A549 (cell line): ENCODE measurements at regions of chr20 and their contacts with region 1.

Region 1: DNA sequence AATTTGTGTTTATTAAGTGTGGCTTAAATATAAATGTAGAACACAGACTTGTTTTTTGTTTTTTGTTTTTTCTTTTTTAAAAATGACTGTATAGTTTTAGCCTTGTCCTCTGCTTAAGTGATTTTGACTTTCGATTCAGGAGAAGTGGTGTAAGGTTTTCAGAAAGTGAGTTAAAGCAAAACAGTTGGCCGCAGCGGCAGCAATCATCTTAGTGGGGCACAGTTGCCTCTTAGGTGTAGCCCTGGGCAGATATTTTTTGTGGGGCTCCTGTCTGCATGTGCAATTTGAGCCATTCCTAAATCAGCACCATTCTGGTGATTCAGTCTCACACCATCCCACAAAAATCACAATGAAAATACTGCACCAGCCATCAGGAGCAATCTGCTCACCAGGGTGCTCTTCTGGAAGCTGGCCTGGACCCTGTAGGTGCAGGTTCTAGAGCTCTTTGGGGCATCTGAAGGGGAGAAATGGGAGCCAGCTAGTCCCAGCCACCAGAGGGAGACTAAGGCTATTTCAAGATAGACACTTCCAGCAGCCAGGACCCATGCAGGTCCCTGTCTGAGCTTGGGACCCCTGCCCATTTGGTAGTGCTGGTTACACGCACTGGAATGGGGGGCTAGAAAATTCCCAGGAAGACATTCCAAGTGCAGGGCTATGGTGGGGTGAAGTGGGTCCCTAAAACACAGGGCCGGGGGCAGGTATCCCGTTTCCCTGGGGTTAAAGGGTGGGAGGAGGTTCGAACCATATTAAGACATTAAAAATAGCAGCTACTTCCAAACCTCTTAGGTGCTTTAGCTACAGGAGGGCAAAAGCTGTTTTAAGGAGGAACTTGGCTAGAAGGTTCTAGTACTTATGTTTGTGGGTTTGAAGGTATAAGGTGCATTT is 156.6 kb downstream of the NFATC2 start:
- DNase-seq: peak; percentile 62 to 69
- ATAC-seq: peak; percentile 74 to 84
- H3K4me3 ChIP-seq: no peak overlapping the region
- H3K27ac ChIP-seq: no peak overlapping the region
- H3K4me1 ChIP-seq: peaks cover 34% of the 10 kb centered on the region
- CTCF ChIP-seq: peak; percentile 60
- EP300 ChIP-seq: no peak
- POLR2A ChIP-seq: no peak
- RAD21 ChIP-seq: peak; percentile 73

Region 2: GRCh38 chr20:51372176-51372803 is 13.6 kb before region 1 on chr20:
- CTCF ChIA-PET with region 1: interaction called, 24 read pairs
- POLR2A ChIA-PET with region 1: no interaction called
- DNase-seq: peak; percentile 73 to 91
- ATAC-seq: peak; percentile 97 to 98
- H3K4me3 ChIP-seq: no peak overlapping the region
- H3K27ac ChIP-seq: peak overlapping the region; percentile 34 to 74
- H3K4me1 ChIP-seq: peaks cover 16% of the 10 kb centered on the region
- CTCF ChIP-seq: peak; percentile 88
- EP300 ChIP-seq: no peak
- POLR2A ChIP-seq: no peak
- RAD21 ChIP-seq: peak; percentile 95 to 97

Region 3: GRCh38 chr20:51396365-51396909 is 10.5 kb after region 1 on chr20:
- CTCF ChIA-PET with region 1: interaction called, 10 read pairs
- POLR2A ChIA-PET with region 1: no interaction called
- DNase-seq: no peak
- ATAC-seq: no peak
- H3K4me3 ChIP-seq: no peak overlapping the region
- H3K27ac ChIP-seq: no peak overlapping the region
- H3K4me1 ChIP-seq: no peaks in the 10 kb centered on the region
- CTCF ChIP-seq: no peak
- EP300 ChIP-seq: no peak
- POLR2A ChIP-seq: no peak
- RAD21 ChIP-seq: no peak

Region 4: GRCh38 chr20:51404298-51405060 is 18.6 kb after region 1 on chr20:
- CTCF ChIA-PET with region 1: interaction called, 11 read pairs
- POLR2A ChIA-PET with region 1: no interaction called
- DNase-seq: no peak
- ATAC-seq: no peak; a peak in 1 of 6 replicates
- H3K4me3 ChIP-seq: no peak overlapping the region
- H3K27ac ChIP-seq: no peak overlapping the region
- H3K4me1 ChIP-seq: no peaks in the 10 kb centered on the region
- CTCF ChIP-seq: no peak
- EP300 ChIP-seq: no peak
- POLR2A ChIP-seq: no peak
- RAD21 ChIP-seq: no peak

Region 5: DNA sequence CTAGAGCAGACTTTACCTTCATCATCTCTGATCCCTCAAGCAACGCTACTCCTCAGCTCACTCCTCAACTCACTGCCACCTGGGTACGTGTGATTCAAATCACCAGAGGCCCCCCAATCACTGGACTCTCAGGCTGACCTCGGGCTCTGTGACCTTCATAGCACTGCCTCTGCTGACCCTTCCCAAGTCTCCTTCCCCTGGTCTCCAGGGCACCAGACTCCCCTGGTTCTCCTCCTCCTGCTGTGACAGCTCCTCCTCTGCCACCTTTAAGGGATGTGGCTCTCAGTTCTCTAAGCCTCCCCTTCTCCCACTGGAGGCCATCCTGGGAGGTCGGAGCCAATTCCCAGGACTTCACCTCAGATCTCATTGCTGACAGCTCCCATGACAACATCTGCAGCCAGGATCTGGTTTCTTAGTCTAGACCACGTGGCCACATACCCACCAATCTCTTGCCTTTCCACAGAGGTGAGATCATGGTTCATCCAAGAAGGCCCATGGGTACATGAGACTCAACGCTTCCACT is 66.3 kb after region 1 on chr20:
- CTCF ChIA-PET with region 1: no interaction called
- POLR2A ChIA-PET with region 1: no interaction called
- DNase-seq: no peak
- ATAC-seq: no peak
- H3K4me3 ChIP-seq: no peak overlapping the region
- H3K27ac ChIP-seq: peak overlapping the region in 1 of 2 experiments; percentile 10; a peak in 1 of 6 replicates
- H3K4me1 ChIP-seq: peaks cover 43% of the 10 kb centered on the region
- CTCF ChIP-seq: no peak
- EP300 ChIP-seq: no peak
- POLR2A ChIP-seq: no peak
- RAD21 ChIP-seq: no peak

Region 6: DNA sequence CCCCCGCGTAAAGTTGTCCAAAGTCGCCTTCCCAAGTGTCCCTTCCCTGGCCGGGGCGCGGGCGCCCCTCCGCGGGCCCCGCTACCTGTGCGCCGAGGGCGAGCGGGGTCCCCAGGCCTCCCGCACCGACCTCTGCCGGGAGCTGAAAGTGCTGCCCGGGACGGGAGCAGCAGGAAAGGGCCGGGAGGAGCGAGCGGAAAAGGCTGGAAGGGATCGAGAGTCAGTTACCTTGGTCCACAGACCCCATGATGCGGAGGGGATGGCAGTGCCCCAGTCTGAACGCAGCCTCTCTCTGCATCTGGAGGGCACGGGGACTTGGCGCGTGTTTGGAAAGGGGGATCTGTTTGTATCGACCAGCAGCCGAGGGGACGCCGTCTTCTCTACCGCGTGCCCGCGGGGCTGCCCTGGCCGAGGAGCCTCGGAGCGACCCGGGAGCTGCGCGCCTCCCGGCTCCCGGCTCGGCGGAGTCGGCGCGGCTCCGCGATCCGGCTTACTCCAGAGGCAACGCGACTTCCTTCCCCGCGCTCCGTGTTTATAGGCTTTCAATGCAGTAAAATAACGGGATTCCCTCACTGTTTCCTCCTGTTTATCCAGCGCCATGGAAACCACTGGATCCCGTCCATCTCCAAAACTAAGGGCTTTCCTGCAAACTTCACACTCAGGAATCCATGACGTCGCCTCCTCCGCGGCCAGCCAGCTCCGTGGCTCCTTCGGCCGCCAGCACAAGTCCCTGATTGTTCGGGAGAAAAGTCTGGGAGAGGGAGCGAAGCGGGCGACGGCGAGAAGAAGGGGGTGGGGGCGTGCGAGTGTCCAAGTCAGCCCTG is 176.7 kb after region 1 on chr20:
- CTCF ChIA-PET with region 1: interaction called, 25 read pairs
- POLR2A ChIA-PET with region 1: interaction called, 4 read pairs
- DNase-seq: peak; percentile 65 to 90
- ATAC-seq: peak; percentile 64 to 76
- H3K4me3 ChIP-seq: peak overlapping the region; percentile 59
- H3K27ac ChIP-seq: peak overlapping the region; percentile 88 to 89
- H3K4me1 ChIP-seq: peaks cover 45% of the 10 kb centered on the region
- CTCF ChIP-seq: peak; percentile 41
- EP300 ChIP-seq: no peak
- POLR2A ChIP-seq: no peak
- RAD21 ChIP-seq: peak; percentile 39 to 71; a peak in 4 of 5 replicates

Region 7: DNA sequence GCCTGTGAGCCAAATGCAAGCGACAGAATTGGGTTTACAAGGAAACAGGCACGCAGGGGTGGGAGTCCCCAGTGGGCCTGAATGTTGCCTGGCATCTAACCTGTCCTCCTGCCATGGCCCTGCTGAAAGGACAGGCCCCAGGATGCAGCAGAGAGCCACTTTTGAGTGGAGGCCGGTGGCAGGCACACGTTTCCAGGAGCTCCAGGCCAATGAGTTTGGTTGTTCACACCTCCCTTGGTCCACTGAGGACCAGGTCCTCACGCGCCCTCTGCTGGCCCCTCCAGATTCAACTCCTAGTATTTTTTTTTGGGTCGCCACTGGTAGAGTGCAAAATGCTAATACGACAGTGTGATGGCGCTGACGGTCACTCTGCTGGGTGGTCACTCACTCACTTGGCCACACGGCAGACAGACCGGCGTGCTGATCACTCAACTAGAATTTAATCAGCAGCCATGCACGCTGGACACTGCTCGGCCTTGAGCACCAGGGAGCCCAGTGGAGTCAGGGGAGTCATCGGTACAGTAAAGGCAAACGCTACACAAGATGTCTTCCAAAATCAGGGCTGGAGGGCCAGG is 238.4 kb after region 1 on chr20:
- CTCF ChIA-PET with region 1: interaction called, 12 read pairs
- POLR2A ChIA-PET with region 1: no interaction called
- DNase-seq: peak; percentile 75
- ATAC-seq: peak; percentile 76 to 92; a peak in 5 of 6 replicates
- H3K4me3 ChIP-seq: no peak overlapping the region
- H3K27ac ChIP-seq: peak overlapping the region in 1 of 2 experiments; percentile 58; a peak in 4 of 6 replicates
- H3K4me1 ChIP-seq: no peaks in the 10 kb centered on the region
- CTCF ChIP-seq: peak; percentile 78
- EP300 ChIP-seq: no peak
- POLR2A ChIP-seq: no peak
- RAD21 ChIP-seq: peak; percentile 68 to 79